ENCODE measurements at regions of chr5 and their contacts with region 1.

Region 1: DNA sequence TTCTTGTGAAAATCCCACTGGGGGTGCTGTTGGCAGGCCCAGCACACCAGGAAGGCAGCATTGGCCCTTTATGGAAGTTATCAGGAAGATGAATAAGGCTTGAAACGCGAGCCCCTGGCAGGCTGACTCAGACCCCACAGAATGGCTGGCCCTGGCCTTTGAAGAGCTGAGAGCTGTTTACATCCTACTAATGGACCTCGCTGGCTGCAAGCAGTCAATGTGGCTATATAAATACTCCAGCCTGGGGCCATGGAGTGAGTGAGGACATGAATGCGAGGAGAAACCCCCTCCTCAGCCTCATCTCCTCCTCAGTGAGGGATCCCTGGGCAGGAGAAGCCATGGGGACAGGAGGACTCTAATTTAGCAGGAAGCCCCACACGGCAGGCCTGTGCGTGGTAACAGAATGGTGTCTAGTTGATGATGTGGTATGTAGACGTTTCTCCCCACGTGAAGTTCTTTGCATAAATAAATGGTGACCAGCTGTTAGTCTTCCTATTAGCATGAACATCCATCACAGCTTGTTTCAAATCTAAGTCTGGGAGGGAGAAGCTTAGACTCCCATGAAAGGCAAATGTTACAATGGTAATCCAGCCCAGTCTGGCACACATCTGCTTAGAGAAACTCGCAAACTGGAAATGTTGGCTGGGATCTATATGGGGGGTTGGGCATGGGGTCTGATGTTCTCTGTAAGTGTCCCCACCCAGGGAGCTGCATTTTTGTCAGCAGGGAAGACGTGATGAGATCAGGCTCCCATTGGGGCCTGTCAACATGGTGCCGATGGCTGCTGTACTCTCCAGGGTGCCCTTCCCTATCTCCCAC is 175.1 kb upstream of the PITX1 start:
- DNase-seq: no peak

Region 2: DNA sequence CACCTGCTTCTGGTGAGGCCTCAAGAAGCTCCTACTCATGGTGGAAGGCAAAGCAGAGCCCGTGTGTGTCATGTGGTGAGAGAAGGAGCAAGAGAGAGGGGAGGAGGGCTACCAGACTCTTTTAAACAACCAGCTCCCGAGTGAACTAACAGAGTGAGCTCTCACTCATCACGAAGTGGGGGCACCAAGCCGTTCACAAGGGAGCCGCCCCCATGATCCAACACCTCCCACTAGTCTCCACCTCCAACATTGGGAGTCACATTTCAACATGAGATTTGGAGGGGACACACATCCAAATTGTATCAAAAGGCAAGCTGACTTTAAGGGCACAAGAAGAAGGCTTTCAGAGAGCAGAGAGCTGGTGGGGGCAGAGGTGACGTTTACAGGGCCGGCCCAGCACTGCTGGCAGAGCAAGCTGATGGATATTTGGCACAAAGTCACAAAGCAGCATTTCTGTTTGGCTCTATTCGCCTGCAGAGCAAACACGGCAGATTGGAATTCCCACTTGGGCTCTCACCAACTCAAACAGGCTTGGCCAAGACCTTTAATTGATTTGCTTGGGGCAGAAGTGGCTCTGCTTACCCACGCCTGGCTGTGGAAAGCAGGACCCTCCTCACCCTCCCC is 195.1 kb before region 1 on chr5:
- in situ Hi-C with region 1: loop called (anchors 25 kb)
- DNase-seq: peak; percentile 18

Region 3: GRCh38 chr5:135255461-135256178 is 46.5 kb after region 1 on chr5:
- in situ Hi-C with region 1: no loop called
- DNase-seq: no peak